CD4-positive, alpha-beta T cell (primary cell): ENCODE measurements at regions of chr3 and their contacts with region 1.

Region 1: GRCh38 chr3:25648107-25648535 is 16.6 kb downstream of the TOP2B start:
- DNase-seq: peak; percentile 51 to 90 (median 74)
- ATAC-seq: peak; percentile 93
- H3K4me3 ChIP-seq: no peak overlapping the region
- H3K4me3 Mint-ChIP-seq: no peak overlapping the region
- H3K27ac ChIP-seq: no peak overlapping the region
- H3K27ac Mint-ChIP-seq: peak overlapping the region; percentile 9
- H3K4me1 ChIP-seq: peaks cover 7% of the 10 kb centered on the region
- H3K4me1 Mint-ChIP-seq: peaks cover 56% of the 10 kb centered on the region
- H3K27me3 ChIP-seq: no peaks in the 10 kb centered on the region
- H3K27me3 Mint-ChIP-seq: no peaks in the 10 kb centered on the region
- CTCF ChIP-seq: peak; percentile 96

Region 2: GRCh38 chr3:25604107-25604805 is 43.9 kb before region 1 on chr3:
- CTCF ChIA-PET with region 1: interaction called, 3 read pairs
- POLR2A ChIA-PET with region 1: no interaction called
- intact Hi-C with region 1: loop called in 1 of 2 experiments (anchors 5 kb)
- DNase-seq: peak in 2 of 14 experiments; percentile 40 to 55
- ATAC-seq: no peak
- H3K4me3 ChIP-seq: no peak overlapping the region
- H3K4me3 Mint-ChIP-seq: no peak overlapping the region
- H3K27ac ChIP-seq: no peak overlapping the region
- H3K27ac Mint-ChIP-seq: peak overlapping the region; percentile 62
- H3K4me1 ChIP-seq: no peaks in the 10 kb centered on the region
- H3K4me1 Mint-ChIP-seq: no peaks in the 10 kb centered on the region
- H3K27me3 ChIP-seq: no peaks in the 10 kb centered on the region
- H3K27me3 Mint-ChIP-seq: no peaks in the 10 kb centered on the region
- CTCF ChIP-seq: no peak

Region 3: DNA sequence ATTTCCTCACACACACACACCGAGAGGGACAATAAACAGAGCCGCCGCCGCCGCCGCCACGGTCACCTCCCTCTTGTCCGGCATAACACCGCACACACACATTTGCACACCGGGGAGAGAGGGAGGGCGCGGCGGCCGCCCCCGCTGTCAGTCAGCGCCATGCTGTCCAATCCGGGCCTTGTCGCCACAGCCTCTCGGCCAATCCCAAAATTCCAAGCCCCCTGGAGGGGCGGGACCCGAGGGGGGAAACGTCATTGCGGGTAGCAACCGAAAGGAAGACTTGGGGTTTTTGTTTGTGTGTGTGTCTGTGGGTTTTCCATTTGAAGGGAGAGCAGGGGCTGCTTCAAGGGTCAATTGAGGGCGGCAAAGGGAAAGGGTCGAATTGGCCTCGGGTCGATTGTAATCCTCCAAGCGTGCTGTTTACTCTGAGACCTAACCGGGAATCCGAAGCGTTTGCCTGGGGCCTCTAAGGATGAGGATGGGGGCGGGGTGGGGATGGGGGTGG is 16.7 kb after region 1 on chr3 and contains the start of gene TOP2B:
- CTCF ChIA-PET with region 1: interaction called, 27 read pairs
- POLR2A ChIA-PET with region 1: interaction called, 5 read pairs
- intact Hi-C with region 1: no loop called
- DNase-seq: peak; percentile 87 to 97 (median 92)
- ATAC-seq: peak; percentile 89
- H3K4me3 ChIP-seq: peak within 1 kb of the TSS; percentile 94
- H3K4me3 Mint-ChIP-seq: peak within 1 kb of the TSS; percentile 98
- H3K27ac ChIP-seq: peak within 1 kb of the TSS; percentile 92 to 93
- H3K27ac Mint-ChIP-seq: peak within 1 kb of the TSS; percentile 98
- H3K4me1 ChIP-seq: peaks cover 13% of the 10 kb centered on the region
- H3K4me1 Mint-ChIP-seq: peaks cover 49% of the 10 kb centered on the region
- H3K27me3 ChIP-seq: no peaks in the 10 kb centered on the region
- H3K27me3 Mint-ChIP-seq: no peaks in the 10 kb centered on the region
- CTCF ChIP-seq: no peak
- total RNA-seq, gene TOP2B: 79.7 to 80.4 TPM

Region 4: DNA sequence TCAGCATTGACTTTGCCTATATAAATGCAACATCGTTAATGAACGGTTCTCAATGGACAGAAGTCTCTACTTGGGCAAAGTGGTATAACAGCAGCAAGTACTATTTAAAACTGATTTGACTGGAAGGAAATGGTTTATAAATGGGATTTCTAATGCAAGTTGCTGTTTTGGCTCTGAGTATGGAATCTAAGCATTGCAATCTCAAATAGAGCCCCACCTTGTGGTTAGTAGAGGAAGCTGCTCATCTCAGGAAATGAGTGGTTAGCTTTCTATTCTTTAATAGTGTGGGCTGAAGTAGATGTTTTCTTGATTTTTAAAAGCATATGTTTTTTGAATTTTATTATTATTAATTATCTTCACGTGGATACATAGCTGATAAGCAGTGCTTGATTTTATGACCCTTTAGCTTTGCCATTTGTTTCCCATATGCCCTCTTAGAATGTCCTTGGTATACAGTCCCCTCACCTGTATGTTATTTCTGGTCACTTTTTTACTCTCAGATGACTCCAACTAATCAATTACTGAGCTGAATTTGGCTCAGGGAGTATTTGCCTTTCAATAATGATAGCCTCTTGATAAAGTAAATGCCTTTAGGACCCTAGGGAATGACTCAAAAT is 208.9 kb after region 1 on chr3:
- CTCF ChIA-PET with region 1: interaction called, 67 read pairs
- POLR2A ChIA-PET with region 1: interaction called, 7 read pairs
- intact Hi-C with region 1: loop called (anchors 1 kb)
- DNase-seq: peak in 5 of 14 experiments; percentile 3 to 65 (median 57)
- ATAC-seq: peak; percentile 85
- H3K4me3 ChIP-seq: no peak overlapping the region
- H3K4me3 Mint-ChIP-seq: no peak overlapping the region
- H3K27ac ChIP-seq: no peak overlapping the region
- H3K27ac Mint-ChIP-seq: no peak overlapping the region
- H3K4me1 ChIP-seq: no peaks in the 10 kb centered on the region
- H3K4me1 Mint-ChIP-seq: peaks cover 3% of the 10 kb centered on the region
- H3K27me3 ChIP-seq: no peaks in the 10 kb centered on the region
- H3K27me3 Mint-ChIP-seq: no peaks in the 10 kb centered on the region
- CTCF ChIP-seq: peak; percentile 79

Region 5: GRCh38 chr3:25910997-25911396 is 262.9 kb after region 1 on chr3:
- CTCF ChIA-PET with region 1: interaction called, 3 read pairs
- POLR2A ChIA-PET with region 1: no interaction called
- intact Hi-C with region 1: loop called (anchors 5 kb)
- DNase-seq: peak in 12 of 14 experiments; percentile 9 to 61 (median 24)
- ATAC-seq: no peak
- H3K4me3 ChIP-seq: no peak overlapping the region
- H3K4me3 Mint-ChIP-seq: no peak overlapping the region
- H3K27ac ChIP-seq: no peak overlapping the region
- H3K27ac Mint-ChIP-seq: peak overlapping the region; percentile 74
- H3K4me1 ChIP-seq: peaks cover 11% of the 10 kb centered on the region
- H3K4me1 Mint-ChIP-seq: peaks cover 17% of the 10 kb centered on the region
- H3K27me3 ChIP-seq: no peaks in the 10 kb centered on the region
- H3K27me3 Mint-ChIP-seq: peaks cover 6% of the 10 kb centered on the region
- CTCF ChIP-seq: peak; percentile 27

Region 6: GRCh38 chr3:26550413-26550812 is 902.3 kb after region 1 on chr3:
- CTCF ChIA-PET with region 1: no interaction called
- POLR2A ChIA-PET with region 1: no interaction called
- intact Hi-C with region 1: no loop called
- DNase-seq: no peak
- ATAC-seq: no peak
- H3K4me3 ChIP-seq: no peak overlapping the region
- H3K4me3 Mint-ChIP-seq: no peak overlapping the region
- H3K27ac ChIP-seq: no peak overlapping the region
- H3K27ac Mint-ChIP-seq: no peak overlapping the region
- H3K4me1 ChIP-seq: no peaks in the 10 kb centered on the region
- H3K4me1 Mint-ChIP-seq: no peaks in the 10 kb centered on the region
- H3K27me3 ChIP-seq: no peaks in the 10 kb centered on the region
- H3K27me3 Mint-ChIP-seq: no peaks in the 10 kb centered on the region
- CTCF ChIP-seq: no peak

Region 7: GRCh38 chr3:26712211-26713026 is 1064.3 kb after region 1 on chr3:
- CTCF ChIA-PET with region 1: interaction called, 7 read pairs
- POLR2A ChIA-PET with region 1: no interaction called
- intact Hi-C with region 1: loop called in 1 of 2 experiments (anchors 10 kb)
- DNase-seq: peak in 3 of 14 experiments; percentile 22 to 43 (median 34)
- ATAC-seq: no peak
- H3K4me3 ChIP-seq: no peak overlapping the region
- H3K4me3 Mint-ChIP-seq: no peak overlapping the region
- H3K27ac ChIP-seq: no peak overlapping the region
- H3K27ac Mint-ChIP-seq: no peak overlapping the region
- H3K4me1 ChIP-seq: no peaks in the 10 kb centered on the region
- H3K4me1 Mint-ChIP-seq: no peaks in the 10 kb centered on the region
- H3K27me3 ChIP-seq: no peaks in the 10 kb centered on the region
- H3K27me3 Mint-ChIP-seq: no peaks in the 10 kb centered on the region
- CTCF ChIP-seq: no peak

Region 8: GRCh38 chr3:27134165-27134796 is 1486.2 kb after region 1 on chr3:
- CTCF ChIA-PET with region 1: no interaction called
- POLR2A ChIA-PET with region 1: no interaction called
- intact Hi-C with region 1: loop called in 1 of 2 experiments (anchors 10 kb)
- DNase-seq: peak; percentile 29 to 75 (median 42)
- ATAC-seq: peak; percentile 58
- H3K4me3 ChIP-seq: no peak overlapping the region
- H3K4me3 Mint-ChIP-seq: no peak overlapping the region
- H3K27ac ChIP-seq: no peak overlapping the region
- H3K27ac Mint-ChIP-seq: no peak overlapping the region
- H3K4me1 ChIP-seq: no peaks in the 10 kb centered on the region
- H3K4me1 Mint-ChIP-seq: no peaks in the 10 kb centered on the region
- H3K27me3 ChIP-seq: no peaks in the 10 kb centered on the region
- H3K27me3 Mint-ChIP-seq: peaks cover 4% of the 10 kb centered on the region
- CTCF ChIP-seq: peak; percentile 87